PC-9 (cell line): ENCODE measurements at regions of chr3 and their contacts with region 1.

Region 1: DNA sequence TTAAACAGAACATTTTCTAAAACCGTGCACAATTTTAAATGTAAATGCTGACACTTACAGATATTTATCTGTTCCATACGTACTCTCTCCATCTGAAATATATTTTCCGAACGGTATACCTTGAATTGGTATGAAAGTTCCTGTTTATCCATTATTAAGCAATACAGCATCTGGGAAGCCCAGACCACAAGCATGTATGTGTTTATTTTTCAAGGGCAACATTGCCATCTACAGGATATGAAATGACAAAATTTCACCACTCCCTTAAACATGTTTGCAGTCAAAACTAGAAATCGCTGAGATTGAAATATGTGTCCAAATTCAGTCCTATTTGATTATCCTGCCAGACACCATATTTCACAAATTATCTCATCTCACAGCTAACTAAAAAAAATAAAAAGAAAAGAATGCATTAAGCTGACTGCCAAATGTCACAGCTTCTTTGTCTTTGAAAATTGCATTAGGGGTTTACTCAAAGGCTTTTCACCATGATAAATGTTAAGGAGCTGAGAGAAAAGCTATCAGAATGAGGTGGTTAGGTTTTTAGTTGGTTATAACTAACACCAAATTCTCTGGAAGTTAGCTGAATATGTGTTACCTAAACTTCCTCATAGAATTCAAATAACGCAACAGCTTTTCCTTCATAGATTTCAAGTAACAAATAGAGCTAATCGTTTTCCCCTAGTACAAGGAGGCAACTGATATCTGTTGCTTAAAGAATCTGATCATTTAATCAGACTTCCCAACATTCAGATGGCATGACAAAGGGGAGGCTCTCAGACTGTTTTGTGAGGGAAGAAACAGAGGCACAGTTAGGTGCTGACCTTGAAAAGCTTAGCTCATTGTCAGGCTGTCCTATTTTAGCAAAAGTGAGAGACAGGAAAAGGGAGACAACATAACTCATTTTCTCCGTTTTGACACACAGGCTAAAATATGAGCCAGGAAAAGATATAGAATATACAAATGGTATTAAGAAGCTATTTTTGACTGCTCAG is 533.1 kb downstream of the TBL1XR1 start:
- DNase-seq: peak; percentile 10 to 65
- H3K4me3 ChIP-seq: no peak overlapping the region
- H3K27ac ChIP-seq: no peak overlapping the region
- H3K4me1 ChIP-seq: 0 out of 2 replicates have a peak, but pooled peaks cover 4% of the 10 kb centered on the region
- H3K27me3 ChIP-seq: no peaks in the 10 kb centered on the region
- CTCF ChIP-seq: peak; percentile 69

Region 2: GRCh38 chr3:175957002-175957401 is 707.1 kb before region 1 on chr3:
- CTCF ChIA-PET with region 1: no interaction called
- POLR2A ChIA-PET with region 1: no interaction called
- intact Hi-C with region 1: loop called (anchors 10 kb)
- DNase-seq: peak in 1 of 2 experiments; percentile 43
- H3K4me3 ChIP-seq: no peak overlapping the region
- H3K27ac ChIP-seq: no peak overlapping the region
- H3K4me1 ChIP-seq: no peaks in the 10 kb centered on the region
- H3K27me3 ChIP-seq: no peaks in the 10 kb centered on the region
- CTCF ChIP-seq: peak; percentile 63